Pancreas (tissue), 10 donors: ENCODE measurements at regions of chr4 and their contacts with region 1.

Region 1: DNA sequence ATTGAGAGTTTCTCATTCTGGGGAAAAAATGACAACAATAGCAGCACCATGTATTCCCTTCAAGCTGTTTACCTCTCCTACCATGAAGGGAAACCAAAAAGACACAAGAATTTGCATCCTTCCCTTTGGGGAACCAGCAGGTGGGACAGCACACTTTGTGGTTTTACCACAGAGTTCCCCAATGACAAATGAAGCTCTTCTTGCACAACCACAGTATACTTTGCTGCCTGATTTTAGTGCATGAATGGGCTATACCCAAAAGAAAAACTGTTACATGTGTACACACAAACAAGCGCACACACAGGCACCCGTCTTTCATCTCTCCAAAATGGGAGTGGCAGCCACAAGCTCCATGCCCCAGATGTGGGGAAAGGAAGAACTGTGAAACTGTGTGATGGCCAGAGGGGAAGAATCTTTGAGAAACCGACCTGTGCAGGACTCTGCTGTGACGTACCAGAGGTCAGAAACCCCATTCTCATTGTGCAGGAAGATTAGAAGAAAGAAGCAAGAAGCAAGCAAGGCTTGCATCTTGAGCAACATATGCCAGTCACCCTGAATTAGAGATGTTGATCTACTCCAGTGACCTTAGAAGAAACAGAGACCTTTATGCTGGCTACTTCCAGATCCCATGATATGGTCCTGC is 2.7 kb upstream of the MAML3 start:
- DNase-seq: no peak
- ATAC-seq: no peak
- H3K4me3 ChIP-seq: no peak overlapping the region
- H3K27ac ChIP-seq: no peak overlapping the region
- H3K4me1 ChIP-seq: peaks cover 12 to 26% (median 15%) of the 10 kb centered on the region in 3 donors
- H3K27me3 ChIP-seq: no peaks in the 10 kb centered on the region
- CTCF ChIP-seq: no peak

Region 2: GRCh38 chr4:139872274-139872673 is 284.4 kb before region 1 on chr4:
- intact Hi-C with region 1: no loop called
- DNase-seq: no peak
- ATAC-seq: peak in 3 of 4 donors; percentile 42 to 86 (median 48)
- H3K4me3 ChIP-seq: no peak overlapping the region
- H3K27ac ChIP-seq: no peak overlapping the region
- H3K4me1 ChIP-seq: peaks cover 0 to 5% (median 0%) of the 10 kb centered on the region in 3 donors
- H3K27me3 ChIP-seq: no peaks in the 10 kb centered on the region
- CTCF ChIP-seq: no peak

Region 3: DNA sequence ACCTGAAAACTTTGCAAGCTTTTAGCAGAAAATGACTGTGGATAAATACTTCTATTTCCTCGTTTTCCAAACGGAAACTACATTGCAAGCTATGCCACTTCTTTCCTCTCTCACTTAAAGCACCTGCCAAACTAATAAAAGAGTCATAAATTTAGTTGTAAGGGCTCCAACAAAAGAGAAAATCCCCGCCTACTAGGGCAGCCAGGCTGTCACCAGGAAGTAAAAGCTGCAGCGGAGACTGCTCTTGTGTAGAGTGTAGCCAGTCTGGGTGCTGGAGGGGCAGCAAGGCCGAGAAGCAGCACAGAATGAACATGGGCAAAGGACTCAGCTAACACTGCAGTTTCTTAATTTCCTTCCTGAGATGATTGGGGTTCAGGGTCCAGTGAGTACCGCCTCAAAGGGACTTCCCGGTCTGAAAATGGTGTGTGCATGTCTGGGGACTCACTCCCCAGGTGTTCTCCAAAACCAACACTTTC is 86.7 kb after region 1 on chr4:
- intact Hi-C with region 1: loop called in 2 of 3 experiments (anchors 5 to 10 kb)
- DNase-seq: peak in 4 of 6 donors; percentile 28 to 60 (median 52)
- ATAC-seq: peak; percentile 76 to 89 (median 84)
- H3K4me3 ChIP-seq: peak overlapping the region in 1 of 4 donors; percentile 8
- H3K27ac ChIP-seq: peak overlapping the region; percentile 11 to 76 (median 60)
- H3K4me1 ChIP-seq: peaks cover 0 to 8% (median 3%) of the 10 kb centered on the region in 3 donors
- H3K27me3 ChIP-seq: no peaks in the 10 kb centered on the region
- CTCF ChIP-seq: no peak